A549 (cell line): ENCODE measurements at regions of chr9 and their contacts with region 1.

Region 1: DNA sequence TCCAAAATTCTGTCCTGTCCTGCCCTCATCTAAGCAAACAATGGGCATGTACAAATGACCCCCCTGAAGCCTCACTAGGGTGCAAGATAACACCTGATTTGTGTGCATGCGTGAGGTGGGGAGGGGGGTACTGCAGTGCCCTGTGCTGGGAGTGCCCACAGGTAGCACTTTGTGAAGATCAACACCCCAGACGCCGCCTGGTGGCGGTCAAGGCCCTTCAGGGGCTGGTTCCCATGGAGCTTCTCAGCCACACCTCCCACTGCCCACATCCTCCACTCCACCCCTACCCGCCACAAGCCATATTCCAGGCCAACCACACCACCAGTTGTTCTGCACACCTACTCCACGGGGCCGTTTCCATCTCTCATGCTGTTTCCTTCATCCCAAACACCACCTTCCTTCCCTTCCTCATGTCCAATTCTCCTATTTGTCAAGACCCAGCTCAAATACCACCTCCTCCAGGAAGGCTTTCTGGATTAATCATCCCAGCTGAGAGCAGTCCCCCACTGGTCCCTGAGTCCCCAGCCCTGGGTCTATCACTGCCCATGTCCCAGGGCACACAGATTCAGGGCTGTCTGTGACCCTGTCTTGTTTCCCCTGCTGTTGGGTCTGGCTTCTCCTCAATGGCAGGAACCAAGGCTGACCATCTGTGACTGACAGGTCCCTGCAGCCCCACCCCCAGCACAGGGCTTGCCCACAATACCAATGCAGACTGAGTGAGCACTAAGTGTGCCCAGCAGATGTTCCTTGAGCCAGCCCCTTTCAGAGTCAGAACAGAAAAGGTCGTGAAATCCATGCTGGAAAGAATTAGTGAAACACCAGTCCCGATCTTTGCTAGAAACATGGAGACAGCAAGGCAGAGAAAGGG is 178.4 kb downstream of the PAX5 start:
- DNase-seq: peak; percentile 61 to 92
- ATAC-seq: peak; percentile 91 to 97
- H3K4me3 ChIP-seq: no peak overlapping the region
- H3K27ac ChIP-seq: no peak overlapping the region
- H3K4me1 ChIP-seq: no peaks in the 10 kb centered on the region
- CTCF ChIP-seq: peak; percentile 53
- EP300 ChIP-seq: no peak
- POLR2A ChIP-seq: no peak
- RAD21 ChIP-seq: peak; percentile 52 to 53

Region 2: GRCh38 chr9:36382484-36382883 is 473.2 kb before region 1 on chr9:
- CTCF ChIA-PET with region 1: no interaction called
- POLR2A ChIA-PET with region 1: no interaction called
- DNase-seq: no peak
- ATAC-seq: no peak
- H3K4me3 ChIP-seq: no peak overlapping the region
- H3K27ac ChIP-seq: no peak overlapping the region
- H3K4me1 ChIP-seq: 0 out of 3 replicates have a peak, but pooled peaks cover 7% of the 10 kb centered on the region
- CTCF ChIP-seq: no peak
- EP300 ChIP-seq: no peak
- POLR2A ChIP-seq: no peak
- RAD21 ChIP-seq: no peak

Region 3: DNA sequence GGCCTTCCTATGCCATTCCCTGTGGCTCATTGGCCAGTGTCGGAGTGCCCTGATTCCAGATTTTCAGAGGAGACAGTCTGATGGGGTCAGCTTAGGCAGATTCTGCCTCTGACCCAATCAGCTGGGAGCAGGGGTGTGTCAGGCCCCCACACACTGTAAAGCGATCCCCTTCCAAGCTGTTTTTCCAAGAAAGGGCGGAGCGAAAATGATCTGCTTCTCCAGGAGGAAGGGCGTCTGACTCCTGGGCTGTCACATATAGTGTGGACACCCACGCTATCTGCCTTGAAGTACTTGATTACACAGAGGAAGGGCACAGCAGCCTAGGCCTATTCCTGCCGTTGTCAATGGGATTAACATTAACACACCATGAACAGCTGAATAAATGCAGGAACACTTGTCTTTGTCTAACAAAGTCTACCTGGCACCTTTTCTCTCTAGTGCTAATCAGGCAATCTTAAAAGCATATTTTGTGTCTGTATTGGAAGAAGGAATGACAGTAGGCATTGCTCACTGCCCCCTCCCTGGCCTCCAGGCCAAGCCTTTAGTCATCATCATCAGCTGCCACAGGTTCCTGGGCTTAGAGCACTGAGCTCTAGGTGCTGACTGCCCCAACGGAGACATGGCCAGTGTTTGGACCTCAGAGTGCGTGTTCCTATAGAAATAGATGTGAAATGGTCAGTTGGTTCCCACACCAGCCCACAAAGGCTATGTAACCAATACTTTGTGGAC is 64.3 kb before region 1 on chr9:
- CTCF ChIA-PET with region 1: interaction called, 95 read pairs
- POLR2A ChIA-PET with region 1: no interaction called
- DNase-seq: no peak
- ATAC-seq: no peak
- H3K4me3 ChIP-seq: no peak overlapping the region
- H3K27ac ChIP-seq: no peak overlapping the region
- H3K4me1 ChIP-seq: no peaks in the 10 kb centered on the region
- CTCF ChIP-seq: no peak
- EP300 ChIP-seq: no peak
- POLR2A ChIP-seq: no peak
- RAD21 ChIP-seq: no peak

Region 4: DNA sequence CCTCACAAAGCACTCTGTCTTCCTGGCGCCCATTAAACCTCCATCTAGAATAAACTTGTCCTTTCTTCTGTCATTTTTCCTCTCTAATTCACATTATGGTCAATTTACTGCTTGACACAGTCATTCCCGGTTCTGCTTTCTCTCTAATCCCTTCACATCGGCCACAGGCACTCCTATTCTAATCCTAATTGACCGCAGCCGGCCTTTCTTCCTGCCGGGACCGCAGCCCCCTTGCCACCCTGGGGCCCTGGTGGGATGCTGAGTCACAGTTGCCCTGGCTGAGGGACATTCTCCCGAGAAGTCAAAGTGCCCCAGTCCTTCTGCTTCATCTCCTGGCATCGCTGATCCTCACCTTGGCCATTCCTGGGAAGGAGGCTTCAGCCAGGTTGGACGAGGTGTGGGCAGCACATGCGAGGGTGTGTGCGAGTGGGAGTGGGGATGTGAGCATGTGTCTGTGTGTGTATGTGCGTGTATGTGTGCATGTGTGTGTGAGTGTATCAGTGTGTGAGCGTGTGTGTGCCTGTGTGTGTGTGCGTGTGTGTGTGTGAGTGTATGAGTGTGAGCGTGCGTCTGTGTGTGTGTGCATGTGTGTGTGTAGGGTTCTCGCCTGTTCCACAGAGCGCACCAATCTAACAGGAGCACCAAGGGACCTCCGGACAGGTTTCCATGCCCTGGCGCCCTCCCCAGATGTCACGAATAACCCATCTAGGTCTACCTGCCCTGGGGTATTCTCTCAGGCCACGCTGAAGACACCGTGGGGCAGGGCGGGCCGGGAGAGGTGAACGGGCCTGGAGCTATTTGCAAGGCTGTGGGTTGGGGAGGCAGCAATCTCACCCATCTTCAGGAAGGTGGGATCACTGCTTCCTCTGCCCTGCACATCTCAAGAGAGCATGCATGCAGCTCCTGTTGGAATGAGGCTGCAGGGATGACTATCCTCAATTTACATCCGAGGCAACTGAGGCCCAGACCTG is 12.8 kb before region 1 on chr9:
- CTCF ChIA-PET with region 1: interaction called, 21 read pairs
- POLR2A ChIA-PET with region 1: no interaction called
- DNase-seq: no peak
- ATAC-seq: no peak
- H3K4me3 ChIP-seq: no peak overlapping the region
- H3K27ac ChIP-seq: no peak overlapping the region
- H3K4me1 ChIP-seq: no peaks in the 10 kb centered on the region
- CTCF ChIP-seq: no peak
- EP300 ChIP-seq: no peak
- POLR2A ChIP-seq: no peak
- RAD21 ChIP-seq: no peak

Region 5: DNA sequence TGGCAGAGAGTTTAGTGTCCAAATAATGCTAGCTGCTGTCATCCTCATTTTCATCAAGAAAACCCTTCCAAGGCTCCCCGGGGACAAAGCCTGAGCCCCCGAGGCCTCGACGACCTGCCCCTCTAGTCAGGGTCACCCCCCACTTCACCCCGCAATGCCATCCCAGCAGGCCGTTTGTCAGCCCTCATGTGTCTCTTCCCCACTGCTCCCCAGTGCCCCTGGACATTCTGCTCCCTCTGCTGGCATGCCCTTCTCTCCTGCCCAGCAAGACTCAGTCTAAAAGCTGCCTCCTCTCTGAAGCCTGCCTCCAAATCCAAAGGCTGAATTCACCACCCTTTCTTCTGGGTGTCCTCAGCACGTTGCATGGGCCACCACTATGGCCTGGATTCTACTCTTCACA is 119.0 kb after region 1 on chr9:
- CTCF ChIA-PET with region 1: interaction called, 17 read pairs
- POLR2A ChIA-PET with region 1: no interaction called
- DNase-seq: peak in 1 of 2 experiments; percentile 27
- ATAC-seq: peak; percentile 75 to 83; a peak in 5 of 6 replicates
- H3K4me3 ChIP-seq: no peak overlapping the region
- H3K27ac ChIP-seq: no peak overlapping the region
- H3K4me1 ChIP-seq: peaks cover 14% of the 10 kb centered on the region; the same call in 2 of the 3 replicates
- CTCF ChIP-seq: peak; percentile 41; the same call in 2 of the 3 replicates
- EP300 ChIP-seq: no peak
- POLR2A ChIP-seq: no peak
- RAD21 ChIP-seq: peak; percentile 59 to 62